ENCODE measurements at regions of chr19 and their contacts with region 1.

Region 1: DNA sequence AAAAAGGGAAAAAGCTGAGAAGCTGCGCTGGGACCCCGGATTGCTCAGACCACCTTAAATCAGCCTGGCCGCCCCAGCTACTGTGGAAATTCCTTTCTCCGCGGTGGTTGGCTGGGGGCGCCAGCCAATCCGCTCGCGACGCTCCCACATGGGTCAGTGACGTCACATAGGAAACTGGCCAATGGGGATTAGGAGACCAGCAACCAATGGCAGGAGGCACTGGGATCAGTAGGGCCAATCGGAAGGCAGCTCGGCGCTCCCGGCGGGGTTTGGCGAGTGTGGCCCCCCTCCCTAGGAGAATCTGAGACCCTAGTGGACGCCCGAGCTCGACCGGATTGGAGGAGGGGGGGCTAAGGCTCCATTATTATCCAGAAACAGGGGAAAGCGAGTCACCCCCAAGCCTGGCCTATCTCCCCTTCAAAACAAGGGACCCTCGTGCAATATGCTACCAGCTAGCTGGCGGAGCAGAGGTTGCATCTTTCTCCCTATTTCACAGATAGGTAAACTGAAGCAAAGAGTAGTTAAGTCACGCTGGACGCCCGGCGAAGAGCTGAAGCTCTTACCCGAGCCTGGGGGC is 6.5 kb upstream of the TLE2 start:
- DNase-seq: peak; percentile 98 to 100 (median 99)
- ATAC-seq: peak; percentile 95 to 99 (median 96)
- H3K4me3 ChIP-seq: peak overlapping the region; percentile 31 to 72 (median 59)
- H3K27ac ChIP-seq: peak overlapping the region; percentile 90 to 98 (median 95)
- H3K4me1 ChIP-seq: peaks cover 0 to 26% (median 19%) of the 10 kb centered on the region in 12 donors
- H3K27me3 ChIP-seq: no peaks in the 10 kb centered on the region
- CTCF ChIP-seq: peak in 3 of 12 donors; percentile 2 to 18 (median 15)
- POLR2A ChIP-seq: peak; percentile 41 to 80

Region 2: GRCh38 chr19:2977001-2977685 is 58.5 kb before region 1 on chr19 and contains the start of gene TLE6:
- intact Hi-C with region 1: loop called in 5 of 10 experiments (anchors 2 to 10 kb)
- DNase-seq: peak; percentile 96 to 99 (median 98)
- ATAC-seq: peak; percentile 96 to 97 (median 96)
- H3K4me3 ChIP-seq: peak within 1 kb of the TSS; percentile 11 to 73 (median 59)
- H3K27ac ChIP-seq: peak within 1 kb of the TSS in 9 of 12 donors; percentile 31 to 73 (median 55)
- H3K4me1 ChIP-seq: peaks cover 13 to 62% (median 48%) of the 10 kb centered on the region in 12 donors
- H3K27me3 ChIP-seq: no peaks in the 10 kb centered on the region
- CTCF ChIP-seq: no peak
- POLR2A ChIP-seq: peak in 1 of 2 donors; percentile 22
- total RNA-seq, gene TLE6: 0.21 to 1.3 (median 0.57) TPM in 8 of 9 donors, not detected in the other

Region 3: DNA sequence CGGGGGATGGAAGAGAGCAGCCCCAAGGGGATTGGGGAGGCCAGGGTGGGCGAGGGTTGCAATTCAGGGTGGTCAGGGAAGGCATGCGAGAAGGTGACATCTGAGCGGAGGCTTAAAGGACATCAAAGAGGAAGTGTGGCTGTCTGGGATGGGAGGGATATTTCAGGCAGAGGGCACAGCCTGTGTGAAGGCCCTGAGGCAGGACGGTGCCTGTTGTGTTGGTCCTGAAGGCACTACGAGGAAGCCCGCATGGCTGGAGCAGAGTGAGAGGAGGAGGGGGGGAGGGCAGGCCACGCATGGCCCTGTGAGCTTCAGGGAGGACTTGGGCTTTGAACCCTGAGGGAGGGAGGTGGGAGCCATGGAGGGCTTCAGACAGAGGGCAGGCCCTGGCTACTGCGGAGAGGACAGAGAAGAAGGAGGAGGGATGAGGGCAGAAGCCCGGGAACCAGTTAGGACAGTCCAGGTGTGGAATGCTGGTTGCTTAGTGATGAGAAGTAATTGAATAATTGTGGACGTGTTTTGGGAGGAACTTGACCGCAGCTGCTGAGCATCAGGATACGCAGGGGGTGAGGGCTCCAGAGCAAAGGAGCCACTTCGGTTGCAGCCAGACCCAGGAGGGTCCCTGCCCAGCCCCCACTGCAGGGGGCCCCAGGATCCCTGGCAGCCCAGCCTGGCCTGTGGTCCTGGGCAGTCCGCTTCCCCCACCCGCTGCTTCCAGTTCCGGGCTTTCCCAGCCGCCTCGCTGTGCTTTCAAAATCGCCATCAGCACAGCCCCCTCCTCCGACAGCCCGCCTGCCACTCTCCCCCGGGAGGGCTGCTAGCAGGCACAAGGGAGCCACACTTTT is 52.1 kb before region 1 on chr19:
- intact Hi-C with region 1: loop called in 4 of 10 experiments (anchors 2 to 10 kb)
- DNase-seq: peak; percentile 67 to 84 (median 83)
- ATAC-seq: peak; percentile 24 to 71 (median 59)
- H3K4me3 ChIP-seq: peak overlapping the region in 10 of 12 donors; percentile 34 to 55 (median 46)
- H3K27ac ChIP-seq: peak overlapping the region; percentile 41 to 88 (median 76)
- H3K4me1 ChIP-seq: peaks cover 3 to 27% (median 23%) of the 10 kb centered on the region in 12 donors
- H3K27me3 ChIP-seq: peaks cover 0 to 11% (median 0%) of the 10 kb centered on the region in 9 donors
- CTCF ChIP-seq: no peak
- POLR2A ChIP-seq: no peak

Region 4: GRCh38 chr19:3062168-3063102 is 26.8 kb after region 1 on chr19 and contains the start of gene TLE5:
- intact Hi-C with region 1: loop called in 2 of 10 experiments (anchors 2 kb)
- DNase-seq: peak; percentile 73 to 90 (median 79)
- ATAC-seq: peak; percentile 19 to 78 (median 60)
- H3K4me3 ChIP-seq: peak within 1 kb of the TSS; percentile 77 to 98 (median 90)
- H3K27ac ChIP-seq: peak within 1 kb of the TSS; percentile 97 to 100 (median 99)
- H3K4me1 ChIP-seq: peaks cover 0 to 50% (median 42%) of the 10 kb centered on the region in 12 donors
- H3K27me3 ChIP-seq: no peaks in the 10 kb centered on the region
- CTCF ChIP-seq: peak in 1 of 12 donors; percentile 17
- POLR2A ChIP-seq: no peak
- total RNA-seq, gene TLE5: 593 to 1,121 (median 711) TPM

Region 5: DNA sequence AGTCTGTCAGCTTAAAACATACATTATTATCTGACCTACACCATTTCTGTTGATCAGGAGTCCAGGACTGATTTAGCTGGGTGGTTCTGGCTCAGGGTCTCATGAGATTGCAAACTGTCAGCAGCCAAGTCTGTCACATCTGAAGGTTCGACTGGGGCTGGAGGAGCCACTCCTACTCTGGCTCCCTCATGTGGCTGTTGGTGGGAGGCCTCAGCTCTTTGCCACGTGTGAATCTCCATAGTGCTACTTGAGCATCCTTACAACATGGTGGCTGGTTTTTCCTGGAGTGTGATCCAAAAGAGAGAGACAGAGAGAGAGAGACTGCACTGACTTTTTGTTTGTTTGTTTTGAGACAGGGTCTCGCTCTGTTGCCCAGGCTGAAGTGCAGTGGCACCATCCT is 267.1 kb after region 1 on chr19:
- intact Hi-C with region 1: no loop called
- DNase-seq: no peak
- ATAC-seq: no peak
- H3K4me3 ChIP-seq: no peak overlapping the region
- H3K27ac ChIP-seq: no peak overlapping the region
- H3K4me1 ChIP-seq: peaks cover 0 to 10% (median 1%) of the 10 kb centered on the region in 12 donors
- H3K27me3 ChIP-seq: peaks cover 0 to 44% (median 12%) of the 10 kb centered on the region in 9 donors
- CTCF ChIP-seq: no peak
- POLR2A ChIP-seq: no peak

Measured in heart left ventricle (tissue), 16 donors.